CD8-positive, alpha-beta T cell (primary cell): ENCODE measurements at regions of chr19 and their contacts with region 1.

Region 1: DNA sequence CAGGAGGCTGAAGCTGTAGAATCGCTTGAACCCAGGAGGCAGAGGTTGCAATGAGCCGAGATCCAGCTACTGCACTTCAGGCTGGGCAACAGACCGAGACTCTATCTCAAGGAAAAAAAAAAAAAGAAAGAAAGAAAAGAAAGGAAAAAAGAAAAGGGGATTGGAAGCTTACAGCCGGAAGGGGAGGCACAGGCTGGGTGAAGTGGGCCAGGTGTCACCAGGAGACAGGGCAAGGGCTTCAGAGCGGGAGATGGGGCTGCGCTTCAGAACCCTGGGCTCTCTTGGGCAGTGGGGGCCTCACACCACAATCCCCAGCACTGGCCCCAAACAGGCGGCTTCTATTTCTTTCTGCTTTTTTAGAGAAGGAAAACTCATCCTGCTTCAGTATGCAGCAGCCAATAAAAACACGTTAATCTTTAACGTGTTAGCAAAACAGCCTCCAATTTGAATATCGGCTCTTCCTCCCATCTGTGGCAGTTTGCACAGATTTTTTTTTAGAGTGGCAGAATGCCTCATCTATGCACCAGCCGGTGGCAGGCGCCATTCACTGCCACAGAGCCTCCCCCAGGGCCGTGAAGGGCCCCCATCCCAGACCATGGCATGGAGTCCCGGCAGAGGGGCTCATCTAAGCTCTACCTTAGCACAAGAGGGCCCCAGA is 46.6 kb upstream of the C19orf12 start:
- DNase-seq: no peak
- ATAC-seq: no peak
- H3K4me3 ChIP-seq: no peak overlapping the region
- H3K4me3 Mint-ChIP-seq: no peak overlapping the region
- H3K27ac ChIP-seq: no peak overlapping the region
- H3K27ac Mint-ChIP-seq: no peak overlapping the region
- H3K4me1 ChIP-seq: no peaks in the 10 kb centered on the region
- H3K4me1 Mint-ChIP-seq: peaks cover 2% of the 10 kb centered on the region
- H3K27me3 ChIP-seq: no peaks in the 10 kb centered on the region
- H3K27me3 Mint-ChIP-seq: peaks cover 1% of the 10 kb centered on the region
- CTCF ChIP-seq: no peak

Region 2: DNA sequence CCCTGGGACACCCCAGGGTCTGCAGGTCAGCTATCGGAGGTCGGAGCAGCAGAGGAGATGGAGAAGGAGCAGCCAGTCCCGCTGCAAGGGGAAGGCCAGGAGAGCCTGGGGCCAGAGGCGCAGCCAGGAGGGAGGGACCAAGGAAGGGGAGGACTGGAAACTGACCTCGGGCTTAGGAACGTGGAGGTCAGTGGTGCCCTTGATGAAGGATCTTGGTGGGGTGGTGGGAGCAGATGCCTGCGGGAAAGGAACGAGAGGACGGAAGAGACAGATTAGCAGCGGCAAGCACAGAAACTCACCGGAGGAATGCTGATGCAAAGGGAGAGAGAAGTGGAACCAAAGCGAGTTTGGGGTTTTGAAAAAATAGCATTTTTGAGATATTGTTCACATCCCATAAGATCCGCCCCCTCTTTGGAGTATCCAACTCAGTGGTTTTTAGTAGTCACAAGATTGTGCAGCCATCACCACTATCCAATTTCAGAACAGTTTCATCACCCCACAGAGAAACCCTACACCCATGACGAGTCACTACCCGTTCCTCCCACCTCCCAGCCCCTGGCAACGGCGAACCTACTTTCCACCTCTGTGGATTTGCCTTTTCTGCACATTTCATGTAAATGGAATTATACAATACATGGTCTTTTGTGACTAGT is 74.3 kb before region 1 on chr19:
- CTCF ChIA-PET with region 1: no interaction called
- POLR2A ChIA-PET with region 1: no interaction called
- intact Hi-C with region 1: no loop called
- DNase-seq: no peak
- ATAC-seq: no peak
- H3K4me3 ChIP-seq: no peak overlapping the region
- H3K4me3 Mint-ChIP-seq: no peak overlapping the region
- H3K27ac ChIP-seq: no peak overlapping the region
- H3K27ac Mint-ChIP-seq: no peak overlapping the region
- H3K4me1 ChIP-seq: peaks cover 13% of the 10 kb centered on the region
- H3K4me1 Mint-ChIP-seq: peaks cover 26% of the 10 kb centered on the region
- H3K27me3 ChIP-seq: no peaks in the 10 kb centered on the region
- H3K27me3 Mint-ChIP-seq: no peaks in the 10 kb centered on the region
- CTCF ChIP-seq: no peak

Region 3: DNA sequence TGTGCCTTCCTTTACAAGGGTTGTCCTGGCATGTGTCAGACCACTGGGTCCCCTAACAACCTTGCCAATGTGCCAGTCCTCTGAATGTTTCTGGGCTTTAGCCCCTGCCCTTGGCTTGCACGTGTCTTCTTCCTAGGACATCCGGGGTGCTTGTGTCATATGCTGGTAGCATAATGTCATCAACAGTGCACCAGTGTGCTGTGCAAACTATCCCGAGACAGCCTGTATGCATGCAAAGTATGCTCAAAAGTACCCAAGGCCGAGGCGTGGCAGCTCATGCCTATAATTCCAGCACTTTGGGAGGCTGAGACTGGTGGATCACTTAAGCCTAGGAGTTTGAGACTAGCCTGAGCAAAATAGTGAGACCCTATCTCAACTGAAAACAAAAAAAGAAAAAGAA is 25.9 kb before region 1 on chr19:
- CTCF ChIA-PET with region 1: interaction called, 27 read pairs
- POLR2A ChIA-PET with region 1: no interaction called
- intact Hi-C with region 1: loop called (anchors 1 kb)
- DNase-seq: no peak
- ATAC-seq: no peak
- H3K4me3 ChIP-seq: no peak overlapping the region
- H3K4me3 Mint-ChIP-seq: no peak overlapping the region
- H3K27ac ChIP-seq: no peak overlapping the region
- H3K27ac Mint-ChIP-seq: no peak overlapping the region
- H3K4me1 ChIP-seq: no peaks in the 10 kb centered on the region
- H3K4me1 Mint-ChIP-seq: no peaks in the 10 kb centered on the region
- H3K27me3 ChIP-seq: no peaks in the 10 kb centered on the region
- H3K27me3 Mint-ChIP-seq: peaks cover 4% of the 10 kb centered on the region
- CTCF ChIP-seq: no peak

Region 4: GRCh38 chr19:29771708-29772414 is 10.2 kb after region 1 on chr19:
- CTCF ChIA-PET with region 1: interaction called, 36 read pairs
- POLR2A ChIA-PET with region 1: interaction called, 3 read pairs
- intact Hi-C with region 1: no loop called
- DNase-seq: peak in 6 of 9 experiments; percentile 10 to 58 (median 32)
- ATAC-seq: no peak
- H3K4me3 ChIP-seq: no peak overlapping the region
- H3K4me3 Mint-ChIP-seq: no peak overlapping the region
- H3K27ac ChIP-seq: no peak overlapping the region
- H3K27ac Mint-ChIP-seq: no peak overlapping the region
- H3K4me1 ChIP-seq: no peaks in the 10 kb centered on the region
- H3K4me1 Mint-ChIP-seq: peaks cover 2% of the 10 kb centered on the region
- H3K27me3 ChIP-seq: no peaks in the 10 kb centered on the region
- H3K27me3 Mint-ChIP-seq: no peaks in the 10 kb centered on the region
- CTCF ChIP-seq: peak; percentile 34

Region 5: DNA sequence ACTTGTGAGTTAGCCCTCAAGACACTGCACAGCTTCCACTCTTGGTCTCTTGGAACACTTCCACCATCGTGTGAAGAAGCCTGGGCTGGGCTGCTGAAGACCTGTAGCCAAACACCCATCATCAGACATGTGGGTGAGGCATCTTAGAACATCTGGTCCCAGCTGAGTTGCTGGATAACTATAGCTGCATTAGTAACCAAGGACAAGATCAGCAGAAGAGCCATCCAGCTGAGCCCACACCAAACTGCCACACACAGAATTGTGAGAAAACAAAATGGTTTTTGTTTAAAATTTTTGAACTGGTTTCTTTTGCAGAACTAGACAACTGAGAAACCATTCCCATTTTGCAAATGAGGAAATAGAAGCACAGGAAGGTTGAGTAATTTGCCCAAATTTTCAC is 106.3 kb after region 1 on chr19:
- CTCF ChIA-PET with region 1: interaction called, 145 read pairs
- POLR2A ChIA-PET with region 1: interaction called, 3 read pairs
- intact Hi-C with region 1: loop called (anchors 1 kb)
- DNase-seq: no peak
- ATAC-seq: no peak
- H3K4me3 ChIP-seq: no peak overlapping the region
- H3K4me3 Mint-ChIP-seq: no peak overlapping the region
- H3K27ac ChIP-seq: no peak overlapping the region
- H3K27ac Mint-ChIP-seq: no peak overlapping the region
- H3K4me1 ChIP-seq: no peaks in the 10 kb centered on the region
- H3K4me1 Mint-ChIP-seq: peaks cover 8% of the 10 kb centered on the region
- H3K27me3 ChIP-seq: peaks cover 0 to 6% of the 10 kb centered on the region in 2 experiments
- H3K27me3 Mint-ChIP-seq: peaks cover 10% of the 10 kb centered on the region
- CTCF ChIP-seq: no peak

Region 6: GRCh38 chr19:29878973-29879654 is 117.4 kb after region 1 on chr19:
- CTCF ChIA-PET with region 1: interaction called, 145 read pairs
- POLR2A ChIA-PET with region 1: no interaction called
- intact Hi-C with region 1: no loop called
- DNase-seq: no peak
- ATAC-seq: no peak
- H3K4me3 ChIP-seq: no peak overlapping the region
- H3K4me3 Mint-ChIP-seq: no peak overlapping the region
- H3K27ac ChIP-seq: no peak overlapping the region
- H3K27ac Mint-ChIP-seq: no peak overlapping the region
- H3K4me1 ChIP-seq: no peaks in the 10 kb centered on the region
- H3K4me1 Mint-ChIP-seq: no peaks in the 10 kb centered on the region
- H3K27me3 ChIP-seq: no peaks in the 10 kb centered on the region
- H3K27me3 Mint-ChIP-seq: peaks cover 21% of the 10 kb centered on the region
- CTCF ChIP-seq: no peak